ENCODE measurements at regions of chr9 and their contacts with region 1.

Region 1: DNA sequence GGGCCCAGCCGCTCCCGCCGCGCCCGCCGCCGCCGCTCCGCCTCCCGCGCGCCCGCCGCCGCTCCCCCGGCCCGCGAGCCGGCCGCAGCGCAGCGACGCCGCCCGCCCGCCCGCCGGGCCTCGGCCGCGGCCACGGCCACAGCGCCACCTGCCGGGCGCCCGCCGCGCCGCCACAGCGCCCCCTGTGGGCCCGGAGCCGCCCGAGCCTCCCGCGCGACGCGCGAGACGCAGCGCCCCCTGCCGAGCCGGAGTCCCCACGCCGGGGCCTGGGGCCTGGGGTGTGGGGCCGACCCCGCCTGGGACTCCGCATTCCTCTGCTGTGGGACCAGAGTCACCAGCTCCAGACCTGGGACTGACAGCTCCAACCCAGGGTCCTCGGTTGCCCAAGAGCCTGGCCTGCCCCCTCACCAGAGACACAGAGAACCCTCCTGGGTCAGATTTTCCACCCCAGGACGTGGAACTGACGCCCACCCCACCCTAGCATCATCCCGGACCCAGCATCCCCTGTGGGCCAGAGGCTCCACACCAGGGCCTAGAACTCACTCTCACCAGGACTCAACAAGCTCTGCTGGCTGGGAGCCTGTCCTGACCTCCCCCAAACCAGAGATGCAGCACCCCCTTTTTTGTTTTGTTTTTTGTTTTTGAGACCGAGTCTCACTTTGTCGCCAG is at the start of gene RAPGEF1:
- DNase-seq: peak; percentile 76
- ATAC-seq: peak; percentile 79
- H3K4me3 Mint-ChIP-seq: peak within 1 kb of the TSS; percentile 98
- H3K27ac Mint-ChIP-seq: peak within 1 kb of the TSS; percentile 94
- H3K4me1 Mint-ChIP-seq: peaks cover 60% of the 10 kb centered on the region
- H3K27me3 Mint-ChIP-seq: no peaks in the 10 kb centered on the region
- CTCF ChIP-seq: peak; percentile 94
- total RNA-seq, gene RAPGEF1: 84.5 to 85.2 TPM

Region 2: GRCh38 chr9:131590908-131591844 is 148.9 kb before region 1 on chr9:
- CTCF ChIA-PET with region 1: interaction called, 115 read pairs
- POLR2A ChIA-PET with region 1: interaction called, 4 read pairs
- intact Hi-C with region 1: loop called (anchors 2 kb)
- DNase-seq: peak; percentile 90
- ATAC-seq: peak; percentile 94
- H3K4me3 Mint-ChIP-seq: no peak overlapping the region
- H3K27ac Mint-ChIP-seq: peak overlapping the region; percentile 86
- H3K4me1 Mint-ChIP-seq: peaks cover 25% of the 10 kb centered on the region
- H3K27me3 Mint-ChIP-seq: no peaks in the 10 kb centered on the region
- CTCF ChIP-seq: peak; percentile 93

Region 3: DNA sequence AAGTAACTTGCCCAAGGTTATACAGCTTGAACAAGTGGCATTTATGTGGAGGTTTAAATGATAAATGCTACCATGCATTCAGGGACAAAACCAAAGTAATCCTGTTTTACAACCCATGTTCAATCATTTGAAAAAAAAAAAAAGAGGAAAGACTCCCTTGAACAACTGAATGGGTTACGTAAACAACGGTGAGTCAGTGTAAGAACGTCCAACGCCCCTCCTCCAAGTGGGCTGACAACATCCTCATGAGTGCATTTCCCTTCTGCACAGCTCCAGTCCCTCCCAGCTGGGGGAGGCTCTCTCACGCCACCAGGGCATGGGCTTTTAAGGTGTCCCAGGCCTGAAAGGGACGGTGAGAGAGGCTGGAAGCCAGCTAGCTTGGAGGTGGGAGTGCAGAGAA is 104.8 kb before region 1 on chr9:
- CTCF ChIA-PET with region 1: interaction called, 15 read pairs
- POLR2A ChIA-PET with region 1: interaction called, 5 read pairs
- intact Hi-C with region 1: no loop called
- DNase-seq: peak; percentile 90
- ATAC-seq: peak; percentile 100
- H3K4me3 Mint-ChIP-seq: no peak overlapping the region
- H3K27ac Mint-ChIP-seq: peak overlapping the region; percentile 88
- H3K4me1 Mint-ChIP-seq: peaks cover 33% of the 10 kb centered on the region
- H3K27me3 Mint-ChIP-seq: no peaks in the 10 kb centered on the region
- CTCF ChIP-seq: no peak

Region 4: GRCh38 chr9:131668439-131669268 is 71.5 kb before region 1 on chr9:
- CTCF ChIA-PET with region 1: interaction called, 17 read pairs
- POLR2A ChIA-PET with region 1: interaction called, 66 read pairs
- intact Hi-C with region 1: no loop called
- DNase-seq: peak; percentile 87
- ATAC-seq: peak; percentile 74
- H3K4me3 Mint-ChIP-seq: peak overlapping the region; percentile 71
- H3K27ac Mint-ChIP-seq: peak overlapping the region; percentile 100
- H3K4me1 Mint-ChIP-seq: peaks cover 81% of the 10 kb centered on the region
- H3K27me3 Mint-ChIP-seq: no peaks in the 10 kb centered on the region
- CTCF ChIP-seq: no peak

Region 5: DNA sequence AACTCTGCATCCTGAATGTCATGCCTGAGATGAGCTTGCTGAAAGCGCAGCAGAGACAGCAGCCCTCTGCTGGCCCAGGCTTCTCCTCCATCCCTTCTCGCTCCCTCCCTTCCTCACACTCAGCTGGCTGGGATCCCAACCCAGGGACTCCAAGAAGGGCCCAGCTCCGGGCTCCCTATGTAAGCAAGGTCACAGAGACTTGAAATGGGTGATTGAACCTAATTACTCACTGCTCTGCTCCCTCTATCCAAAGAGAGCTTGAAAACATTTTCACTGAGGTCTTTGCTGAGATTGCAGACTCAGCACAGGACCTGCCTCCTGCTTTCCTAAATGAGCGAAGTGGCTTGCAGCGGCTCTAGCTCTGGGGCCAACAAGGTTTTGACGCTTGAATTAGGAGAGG is 43.0 kb before region 1 on chr9:
- CTCF ChIA-PET with region 1: interaction called, 17 read pairs
- POLR2A ChIA-PET with region 1: interaction called, 4 read pairs
- intact Hi-C with region 1: no loop called
- DNase-seq: no peak
- ATAC-seq: no peak
- H3K4me3 Mint-ChIP-seq: no peak overlapping the region
- H3K27ac Mint-ChIP-seq: no peak overlapping the region
- H3K4me1 Mint-ChIP-seq: peaks cover 79% of the 10 kb centered on the region
- H3K27me3 Mint-ChIP-seq: no peaks in the 10 kb centered on the region
- CTCF ChIP-seq: no peak

Region 6: DNA sequence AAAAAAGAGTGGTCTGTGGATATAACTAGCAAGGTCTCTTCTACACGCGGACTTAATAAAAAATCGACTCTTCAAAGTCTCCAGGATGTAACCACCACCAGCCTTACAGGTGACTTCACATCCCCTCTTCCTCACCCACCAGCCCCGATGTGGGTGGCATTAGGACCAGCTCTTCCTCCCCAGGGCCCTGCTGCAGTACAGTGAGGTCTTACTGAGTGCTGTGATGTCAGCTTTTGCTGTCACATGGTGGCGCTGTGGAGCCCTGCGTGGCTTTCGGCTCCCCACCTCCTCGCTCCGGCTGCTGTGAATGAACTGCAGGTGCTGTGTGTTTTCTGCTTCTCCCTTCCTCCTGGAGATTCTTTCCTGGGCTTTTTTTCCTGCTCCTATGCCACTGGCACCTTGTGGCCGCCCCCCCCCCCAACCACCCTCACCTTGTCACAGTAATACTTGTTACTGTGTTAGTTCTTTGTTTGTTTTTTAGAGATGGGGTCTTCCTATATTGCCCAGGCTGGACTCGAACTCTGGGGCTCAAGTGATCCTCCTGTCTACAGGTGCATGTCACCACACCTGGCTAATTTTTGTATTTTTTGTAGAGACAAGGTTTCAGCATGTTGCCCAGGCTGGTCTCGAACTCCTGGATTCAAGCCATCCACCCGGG is 15.6 kb after region 1 on chr9:
- CTCF ChIA-PET with region 1: interaction called, 16 read pairs
- POLR2A ChIA-PET with region 1: interaction called, 3 read pairs
- intact Hi-C with region 1: no loop called
- DNase-seq: peak; percentile 96
- ATAC-seq: peak; percentile 99
- H3K4me3 Mint-ChIP-seq: no peak overlapping the region
- H3K27ac Mint-ChIP-seq: no peak overlapping the region
- H3K4me1 Mint-ChIP-seq: peaks cover 16% of the 10 kb centered on the region
- H3K27me3 Mint-ChIP-seq: peaks cover 7% of the 10 kb centered on the region
- CTCF ChIP-seq: peak; percentile 76

Measured in activated CD8-positive, alpha-beta T cell treated with anti-CD3 and anti-CD28 coated beads for 36 hours (primary cell).